ENCODE measurements at regions of chr4 and their contacts with region 1.

Region 1: DNA sequence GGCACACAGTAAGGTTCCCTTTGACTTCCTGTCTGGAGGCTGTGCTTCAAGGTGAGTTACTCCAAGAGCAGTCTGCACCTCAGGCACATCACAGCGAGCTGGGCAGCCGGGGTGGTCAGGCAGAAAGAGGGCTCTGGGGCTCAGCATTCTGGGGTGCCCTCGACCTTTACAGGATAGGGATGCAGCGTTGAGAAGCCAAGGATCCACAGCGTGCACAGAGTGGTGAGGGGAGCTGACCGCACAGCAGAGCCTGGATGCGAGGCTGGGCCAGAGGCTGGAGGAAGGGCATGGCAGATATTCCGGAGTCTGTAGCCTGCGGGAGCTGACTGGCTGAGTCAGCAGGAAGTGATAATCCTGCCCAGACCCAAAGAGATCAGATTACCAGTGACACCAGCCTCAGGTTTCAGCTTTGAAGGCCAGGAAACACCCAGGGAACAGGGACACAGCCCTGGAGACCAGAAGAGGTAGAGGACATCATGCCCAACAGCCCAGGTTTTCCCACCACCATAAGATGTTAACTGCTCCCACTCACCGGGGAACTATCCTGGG is 38.4 kb upstream of the PDLIM3 start:
- DNase-seq: peak in 2 of 3 donors; percentile 56 to 63
- ATAC-seq: peak; percentile 72 to 89
- H3K4me3 ChIP-seq: no peak overlapping the region
- H3K27ac ChIP-seq: peak overlapping the region; percentile 6
- H3K4me1 ChIP-seq: peaks cover 12% of the 10 kb centered on the region
- H3K27me3 ChIP-seq: no peaks in the 10 kb centered on the region

Region 2: DNA sequence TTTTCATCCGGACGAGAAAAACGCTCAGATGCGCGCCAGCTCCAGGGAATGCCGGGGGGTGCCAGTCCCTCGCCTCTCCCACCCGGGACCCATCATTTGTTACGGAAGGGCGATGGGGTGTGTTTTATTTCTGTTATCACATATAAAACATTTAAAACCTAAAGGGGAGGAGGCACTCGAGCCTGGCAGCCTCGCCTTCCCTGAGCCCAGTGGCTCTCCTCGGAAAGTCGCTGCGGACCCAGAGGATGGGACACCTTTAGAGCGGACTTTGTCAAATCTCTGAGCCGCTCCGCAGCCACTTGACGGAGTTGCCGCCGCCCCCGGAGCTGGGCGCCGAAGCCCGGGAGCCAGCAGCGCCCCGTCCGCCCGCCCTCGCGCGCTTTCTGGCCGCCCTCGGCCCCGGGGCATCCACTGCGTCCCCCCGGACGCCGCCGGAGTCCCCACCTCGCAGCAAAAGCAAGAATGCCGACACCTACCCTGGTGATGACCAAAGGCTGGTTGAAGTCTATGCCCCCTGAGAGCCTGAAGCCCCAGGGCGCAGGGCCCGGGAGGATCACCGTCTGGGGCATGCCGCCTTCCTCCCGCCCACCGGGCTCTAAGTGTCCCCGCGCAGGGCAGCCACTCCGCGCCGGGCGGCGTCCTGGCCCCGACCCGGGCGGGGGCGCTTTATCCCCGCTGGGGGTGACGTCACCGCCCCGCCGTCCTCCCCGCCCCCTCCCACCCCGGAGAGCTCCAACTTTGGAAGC is 38.7 kb before region 1 on chr4 and contains the start of gene PDLIM3:
- intact Hi-C with region 1: loop called in 1 of 4 experiments (anchors 5 kb)
- DNase-seq: peak; percentile 83 to 94 (median 92)
- ATAC-seq: peak; percentile 89 to 90
- H3K4me3 ChIP-seq: peak within 1 kb of the TSS; percentile 99
- H3K27ac ChIP-seq: peak within 1 kb of the TSS; percentile 99
- H3K4me1 ChIP-seq: peaks cover 2% of the 10 kb centered on the region
- H3K27me3 ChIP-seq: no peaks in the 10 kb centered on the region
- total RNA-seq, gene PDLIM3: 267 to 965 (median 293) TPM

Region 3: GRCh38 chr4:185742766-185743165 is 169.0 kb after region 1 on chr4:
- intact Hi-C with region 1: no loop called
- DNase-seq: peak in 1 of 3 donors; percentile 19
- ATAC-seq: peak in 1 of 2 donors; percentile 54
- H3K4me3 ChIP-seq: no peak overlapping the region
- H3K27ac ChIP-seq: no peak overlapping the region
- H3K4me1 ChIP-seq: peaks cover 11% of the 10 kb centered on the region
- H3K27me3 ChIP-seq: no peaks in the 10 kb centered on the region